MCF 10A (cell line): ENCODE measurements at regions of chr16 and their contacts with region 1.

Region 1: DNA sequence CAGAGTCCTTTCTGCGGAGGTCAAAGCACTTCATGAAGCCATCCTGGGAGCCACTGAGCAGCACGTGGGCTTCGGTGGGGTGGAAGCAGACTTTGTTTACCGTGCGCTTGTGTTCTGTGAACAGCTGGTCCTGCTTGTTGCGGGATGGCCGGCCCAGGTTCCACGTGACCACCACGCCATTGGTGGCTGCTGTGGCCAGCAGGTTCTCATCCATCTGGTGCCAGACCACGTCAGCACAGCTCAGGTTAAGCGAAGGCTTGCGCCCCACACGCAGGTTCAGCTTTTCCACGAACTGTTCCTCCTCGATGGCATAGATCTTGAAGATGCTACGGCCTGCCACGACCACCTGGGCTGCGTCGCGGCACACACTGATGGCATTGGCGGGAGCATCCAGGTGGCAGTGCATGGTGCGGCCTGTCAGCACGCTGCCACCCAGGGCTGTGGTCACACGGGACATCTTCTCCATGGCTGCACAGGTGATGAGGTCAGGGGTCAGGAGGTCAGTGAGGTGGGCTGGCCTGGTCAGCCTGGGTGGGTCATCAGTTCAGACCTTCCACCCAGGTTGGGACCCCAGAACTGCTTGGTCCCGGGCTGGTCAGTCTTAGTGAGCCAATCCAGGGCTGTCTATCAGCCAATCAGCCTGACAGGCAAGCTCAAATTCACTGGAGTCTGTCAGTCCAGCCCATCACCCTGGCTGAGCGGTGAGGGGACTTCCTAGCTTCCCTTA is 860 bp downstream of the WDR24 start:
- DNase-seq: no peak
- H3K4me3 Mint-ChIP-seq: peak overlapping the region; percentile 87
- H3K27ac Mint-ChIP-seq: peak overlapping the region; percentile 86
- H3K4me1 Mint-ChIP-seq: peaks cover 10% of the 10 kb centered on the region
- H3K27me3 Mint-ChIP-seq: no peaks in the 10 kb centered on the region
- CTCF ChIP-seq: no peak

Region 2: DNA sequence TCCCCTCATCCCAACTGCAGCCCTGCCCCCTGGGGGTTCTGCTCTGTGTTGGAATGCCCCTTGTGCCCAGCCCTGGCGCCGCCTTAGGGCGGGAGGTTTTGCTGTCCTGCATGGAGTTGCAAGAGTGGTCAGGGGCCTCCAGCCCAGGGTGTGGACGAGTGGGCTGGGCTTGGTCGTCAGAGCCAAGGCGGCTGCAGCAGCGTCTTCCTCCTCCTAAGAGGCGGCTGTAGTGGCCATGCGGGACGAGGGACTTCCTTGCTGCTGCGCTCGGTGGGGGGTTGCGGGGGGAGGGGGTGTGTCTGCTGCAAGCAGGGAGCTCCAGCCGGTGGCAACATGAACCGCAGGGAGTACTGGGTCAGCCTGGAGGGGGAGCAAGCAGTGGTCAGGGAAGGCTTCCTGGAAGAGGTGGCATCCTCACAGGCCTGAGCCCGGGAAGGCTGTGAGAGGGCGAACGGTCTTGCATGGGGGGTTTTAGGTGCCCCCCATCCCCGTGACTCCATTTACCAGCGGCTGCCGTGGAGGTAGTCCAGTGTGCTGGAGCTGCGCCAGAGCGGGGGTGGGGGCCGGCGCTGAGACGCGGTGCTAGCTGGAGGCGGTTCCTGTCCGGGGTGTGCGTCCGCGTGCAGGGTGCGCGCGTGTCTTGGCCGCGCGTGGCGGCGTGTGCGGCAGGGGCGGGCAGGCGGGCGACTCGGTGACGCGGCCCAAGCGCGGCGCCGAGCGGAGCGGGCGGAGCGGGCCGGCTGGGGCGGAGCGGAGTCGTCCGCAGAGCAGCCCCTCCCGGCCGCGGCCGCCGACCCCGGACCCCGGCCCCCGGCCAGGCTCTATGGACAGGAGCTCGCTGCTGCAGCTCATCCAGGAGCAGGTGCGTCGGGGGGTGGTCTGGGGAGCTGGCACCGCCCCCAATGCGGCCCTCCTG is 14.1 kb before region 1 on chr16 and contains the start of gene RHBDL1:
- CTCF ChIA-PET with region 1: interaction called, 3 read pairs
- POLR2A ChIA-PET with region 1: interaction called, 32 read pairs
- intact Hi-C with region 1: no loop called
- DNase-seq: no peak
- H3K4me3 Mint-ChIP-seq: no peak within 1 kb of the TSS
- H3K27ac Mint-ChIP-seq: no peak within 1 kb of the TSS
- H3K4me1 Mint-ChIP-seq: no peaks in the 10 kb centered on the region
- H3K27me3 Mint-ChIP-seq: no peaks in the 10 kb centered on the region
- CTCF ChIP-seq: no peak
- total RNA-seq, gene RHBDL1: 3.0 and 4.5 TPM in 2 replicates